PC-9 (cell line): ENCODE measurements at regions of chrX and their contacts with region 1.

Region 1: GRCh38 chrX:65595460-65595876 is 60.9 kb upstream of the LAS1L start:
- DNase-seq: peak; percentile 67 to 80
- H3K4me3 ChIP-seq: no peak overlapping the region
- H3K27ac ChIP-seq: no peak overlapping the region
- H3K4me1 ChIP-seq: 0 out of 2 replicates have a peak, but pooled peaks cover 5% of the 10 kb centered on the region
- H3K27me3 ChIP-seq: no peaks in the 10 kb centered on the region
- CTCF ChIP-seq: peak; percentile 98

Region 2: GRCh38 chrX:65508851-65509250 is 86.6 kb before region 1 on chrX:
- CTCF ChIA-PET with region 1: no interaction called
- POLR2A ChIA-PET with region 1: no interaction called
- intact Hi-C with region 1: no loop called
- DNase-seq: no peak
- H3K4me3 ChIP-seq: no peak overlapping the region
- H3K27ac ChIP-seq: no peak overlapping the region
- H3K4me1 ChIP-seq: no peaks in the 10 kb centered on the region
- H3K27me3 ChIP-seq: no peaks in the 10 kb centered on the region
- CTCF ChIP-seq: no peak

Region 3: GRCh38 chrX:65644621-65645270 is 49.3 kb after region 1 on chrX:
- CTCF ChIA-PET with region 1: no interaction called
- POLR2A ChIA-PET with region 1: no interaction called
- intact Hi-C with region 1: loop called (anchors 5 kb)
- DNase-seq: peak; percentile 58 to 68
- H3K4me3 ChIP-seq: no peak overlapping the region
- H3K27ac ChIP-seq: peak overlapping the region; percentile 68
- H3K4me1 ChIP-seq: peaks cover 33% of the 10 kb centered on the region
- H3K27me3 ChIP-seq: no peaks in the 10 kb centered on the region
- CTCF ChIP-seq: no peak

Region 4: GRCh38 chrX:65667503-65668376 is 72.3 kb after region 1 on chrX and contains the start of gene MSN:
- CTCF ChIA-PET with region 1: no interaction called
- POLR2A ChIA-PET with region 1: no interaction called
- intact Hi-C with region 1: loop called (anchors 2 kb)
- DNase-seq: peak in 1 of 2 experiments; percentile 76
- H3K4me3 ChIP-seq: peak within 1 kb of the TSS; percentile 79
- H3K27ac ChIP-seq: peak within 1 kb of the TSS; percentile 97
- H3K4me1 ChIP-seq: peaks cover 11% of the 10 kb centered on the region
- H3K27me3 ChIP-seq: no peaks in the 10 kb centered on the region
- CTCF ChIP-seq: no peak
- total RNA-seq, gene MSN: 177 and 235 TPM in 2 replicates

Region 5: GRCh38 chrX:65706041-65706828 is 110.8 kb after region 1 on chrX:
- CTCF ChIA-PET with region 1: no interaction called
- POLR2A ChIA-PET with region 1: no interaction called
- intact Hi-C with region 1: loop called (anchors 10 kb)
- DNase-seq: peak; percentile 61 to 63
- H3K4me3 ChIP-seq: no peak overlapping the region
- H3K27ac ChIP-seq: peak overlapping the region; percentile 29
- H3K4me1 ChIP-seq: peaks cover 21% of the 10 kb centered on the region
- H3K27me3 ChIP-seq: no peaks in the 10 kb centered on the region
- CTCF ChIP-seq: no peak

Region 6: GRCh38 chrX:65723706-65724105 is 128.2 kb after region 1 on chrX:
- CTCF ChIA-PET with region 1: no interaction called
- POLR2A ChIA-PET with region 1: no interaction called
- intact Hi-C with region 1: loop called (anchors 5 kb)
- DNase-seq: no peak
- H3K4me3 ChIP-seq: no peak overlapping the region
- H3K27ac ChIP-seq: no peak overlapping the region
- H3K4me1 ChIP-seq: no peaks in the 10 kb centered on the region
- H3K27me3 ChIP-seq: no peaks in the 10 kb centered on the region
- CTCF ChIP-seq: no peak

Region 7: GRCh38 chrX:65745992-65746391 is 150.5 kb after region 1 on chrX:
- CTCF ChIA-PET with region 1: no interaction called
- POLR2A ChIA-PET with region 1: no interaction called
- intact Hi-C with region 1: loop called (anchors 5 kb)
- DNase-seq: no peak
- H3K4me3 ChIP-seq: no peak overlapping the region
- H3K27ac ChIP-seq: no peak overlapping the region
- H3K4me1 ChIP-seq: no peaks in the 10 kb centered on the region
- H3K27me3 ChIP-seq: no peaks in the 10 kb centered on the region
- CTCF ChIP-seq: peak; percentile 42; the same call in 1 of the 2 replicates

Region 8: DNA sequence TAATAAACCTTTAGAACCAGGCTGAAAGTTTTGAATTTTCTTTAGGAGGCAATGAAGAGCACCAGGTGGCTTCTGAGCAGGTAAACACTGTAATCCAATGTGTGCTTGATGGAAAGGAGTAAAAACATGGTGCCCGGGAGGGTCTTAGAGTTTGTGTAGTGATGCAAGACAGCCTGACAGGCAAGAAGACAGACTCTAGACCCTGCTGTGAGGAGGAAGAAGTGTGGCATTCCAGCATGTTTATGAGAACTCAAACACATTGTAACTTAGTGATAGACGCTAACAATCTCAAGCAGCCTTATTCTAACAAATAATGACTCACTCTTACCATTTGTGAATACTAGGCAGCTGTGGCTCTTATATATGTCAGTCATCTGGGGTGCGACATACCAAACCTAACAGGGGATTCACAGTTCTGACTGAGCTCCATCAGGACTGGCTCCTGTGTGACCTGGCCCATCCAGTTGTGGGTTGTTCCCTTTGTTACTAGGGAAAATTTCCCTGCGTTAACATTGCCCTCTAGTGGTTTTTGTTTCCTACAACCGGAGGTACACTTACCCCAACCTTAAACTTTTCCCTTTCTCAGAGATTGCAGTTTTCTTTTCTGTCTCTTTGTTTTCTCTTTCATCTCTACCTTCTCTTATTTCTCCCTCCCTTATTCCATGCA is 390.6 kb after region 1 on chrX:
- CTCF ChIA-PET with region 1: no interaction called
- POLR2A ChIA-PET with region 1: no interaction called
- intact Hi-C with region 1: loop called (anchors 5 kb)
- DNase-seq: peak; percentile 20 to 35
- H3K4me3 ChIP-seq: no peak overlapping the region
- H3K27ac ChIP-seq: no peak overlapping the region
- H3K4me1 ChIP-seq: no peaks in the 10 kb centered on the region
- H3K27me3 ChIP-seq: no peaks in the 10 kb centered on the region
- CTCF ChIP-seq: peak; percentile 65